Activated naive CD4-positive, alpha-beta T cell treated with anti-CD3 and anti-CD28 coated beads for 36 hours (primary cell): ENCODE measurements at regions of chr15 and their contacts with region 1.

Region 1: DNA sequence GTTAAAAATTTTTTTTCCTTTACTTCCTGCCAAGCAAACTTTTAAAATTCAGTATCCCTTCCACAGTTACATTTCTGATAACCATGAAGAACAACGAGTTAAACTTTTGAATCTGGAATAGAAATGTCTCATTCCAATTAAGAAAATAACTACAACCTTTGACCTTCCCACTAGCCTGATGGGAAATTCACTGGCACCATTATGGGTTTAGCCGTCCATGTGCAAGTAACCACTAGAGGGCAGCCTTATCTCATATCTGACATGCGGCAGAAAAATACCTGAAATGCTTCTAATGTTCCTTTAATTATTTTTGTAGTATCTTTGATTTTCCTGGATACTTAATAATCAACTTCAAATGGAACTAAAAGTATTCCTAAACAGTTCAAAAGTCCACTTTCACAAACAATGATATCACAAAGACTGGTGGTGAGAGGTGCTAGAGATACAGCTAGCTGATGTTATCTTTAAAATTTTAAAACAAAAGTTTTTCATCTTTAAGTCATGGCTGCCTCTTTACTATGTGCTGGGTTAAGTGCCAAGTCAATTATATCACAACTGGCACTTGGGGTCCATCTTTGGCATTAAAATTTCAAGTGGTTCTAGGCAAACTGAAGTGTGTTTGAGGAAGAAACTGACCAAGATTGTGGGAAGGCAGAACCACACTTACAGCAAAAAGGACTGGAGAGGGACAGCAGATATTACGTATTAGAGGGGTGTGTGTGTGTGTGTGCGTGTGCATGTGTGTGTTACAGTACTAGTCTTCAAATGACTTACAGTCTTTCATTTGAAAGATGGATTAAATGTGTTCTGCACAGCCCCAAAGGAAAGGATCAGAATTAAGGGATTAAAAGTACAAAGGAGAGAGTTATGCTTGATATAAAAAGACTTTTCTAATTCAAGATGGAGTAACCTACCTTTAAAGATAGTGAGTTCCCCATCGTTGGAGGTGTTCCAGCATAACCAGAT is 107.1 kb upstream of the ICE2 start:
- DNase-seq: peak; percentile 78
- H3K4me3 Mint-ChIP-seq: peak overlapping the region; percentile 30
- H3K27ac Mint-ChIP-seq: peak overlapping the region; percentile 69
- H3K4me1 Mint-ChIP-seq: peaks cover 77% of the 10 kb centered on the region
- H3K27me3 Mint-ChIP-seq: no peaks in the 10 kb centered on the region

Region 2: DNA sequence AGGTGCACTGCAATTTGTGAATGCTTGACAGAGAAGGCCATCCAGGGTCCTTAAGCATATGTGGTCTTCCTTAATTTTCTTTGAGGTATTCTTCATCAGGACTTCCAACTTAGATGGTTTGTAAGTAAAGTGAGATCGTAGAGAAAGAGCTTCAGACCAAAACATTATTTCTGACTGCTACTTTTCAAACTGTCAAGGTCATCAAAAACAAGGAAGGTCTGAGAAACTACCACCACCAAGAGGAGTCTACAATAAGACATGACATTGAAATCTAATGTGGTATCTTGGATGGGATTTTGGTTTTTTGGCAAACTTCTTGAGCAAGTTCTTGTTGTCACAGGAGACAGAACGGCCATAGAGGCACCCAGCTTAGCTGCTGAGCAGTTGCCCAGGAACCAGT is 1618.5 kb before region 1 on chr15:
- CTCF ChIA-PET with region 1: no interaction called
- intact Hi-C with region 1: no loop called
- DNase-seq: no peak
- H3K4me3 Mint-ChIP-seq: no peak overlapping the region
- H3K27ac Mint-ChIP-seq: no peak overlapping the region
- H3K4me1 Mint-ChIP-seq: peaks cover 4% of the 10 kb centered on the region
- H3K27me3 Mint-ChIP-seq: no peaks in the 10 kb centered on the region

Region 3: DNA sequence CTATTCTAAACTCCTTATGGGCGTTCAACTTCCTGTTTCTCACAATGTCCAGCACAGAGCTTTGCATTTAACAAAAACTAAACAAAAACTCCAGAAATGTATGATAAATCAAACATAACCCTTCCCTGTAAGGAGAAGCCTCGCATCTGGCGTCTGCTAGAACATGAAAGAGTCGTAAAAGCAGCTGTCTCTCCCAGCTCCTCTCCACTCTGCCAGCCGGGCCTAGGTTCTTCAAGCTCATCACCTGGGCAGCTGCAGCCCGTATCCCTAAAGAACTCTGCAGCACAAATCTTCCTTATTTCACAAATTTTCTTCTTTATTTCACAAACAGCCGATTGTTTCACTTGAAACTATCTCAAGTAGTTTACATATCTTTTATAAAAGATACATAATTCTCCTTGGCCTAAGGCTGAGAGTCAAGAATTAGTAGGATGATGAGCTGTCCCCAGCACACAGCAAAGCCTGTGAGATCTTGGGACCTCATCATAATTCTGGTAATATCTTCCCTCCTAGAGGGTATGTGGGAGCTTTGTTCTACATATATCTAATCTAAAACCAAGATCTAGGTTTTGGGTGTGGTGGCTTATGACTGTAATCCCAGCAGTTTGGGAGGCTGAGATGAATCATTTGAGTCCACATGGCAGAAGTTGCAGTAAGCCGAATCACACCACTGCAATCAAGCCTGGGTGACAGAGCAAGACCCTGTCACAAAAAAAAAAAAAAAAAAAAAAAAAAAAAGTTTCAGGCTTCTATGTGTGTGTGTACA is 223.5 kb before region 1 on chr15:
- CTCF ChIA-PET with region 1: interaction called, 4 read pairs
- intact Hi-C with region 1: loop called (anchors 2 kb)
- DNase-seq: peak; percentile 61
- H3K4me3 Mint-ChIP-seq: no peak overlapping the region
- H3K27ac Mint-ChIP-seq: no peak overlapping the region
- H3K4me1 Mint-ChIP-seq: peaks cover 12% of the 10 kb centered on the region
- H3K27me3 Mint-ChIP-seq: no peaks in the 10 kb centered on the region

Region 4: DNA sequence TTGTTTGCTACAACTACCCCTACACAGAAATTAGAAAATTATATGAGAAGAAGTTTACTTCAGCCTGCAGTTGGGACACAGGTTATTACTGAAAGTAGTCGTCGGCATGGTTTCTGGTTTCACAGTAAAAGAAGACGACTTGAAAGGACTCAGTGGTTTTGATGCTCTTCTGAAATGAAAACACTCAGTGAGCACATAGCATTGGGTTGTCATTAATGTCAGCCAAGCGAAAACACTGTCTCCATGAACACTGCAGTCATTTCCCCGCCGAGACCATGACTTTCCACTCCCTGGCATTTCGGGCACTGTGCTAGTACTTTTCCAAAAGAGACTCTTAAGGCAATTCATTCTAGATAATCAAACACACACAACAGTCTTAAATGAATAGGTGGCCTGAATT is 37.9 kb before region 1 on chr15:
- CTCF ChIA-PET with region 1: interaction called, 4 read pairs
- intact Hi-C with region 1: loop called (anchors 1 kb)
- DNase-seq: peak; percentile 83
- H3K4me3 Mint-ChIP-seq: peak overlapping the region; percentile 39
- H3K27ac Mint-ChIP-seq: peak overlapping the region; percentile 80
- H3K4me1 Mint-ChIP-seq: peaks cover 92% of the 10 kb centered on the region
- H3K27me3 Mint-ChIP-seq: no peaks in the 10 kb centered on the region

Region 5: GRCh38 chr15:60649845-60650548 is 64.0 kb after region 1 on chr15:
- CTCF ChIA-PET with region 1: interaction called, 9 read pairs
- intact Hi-C with region 1: loop called (anchors 1 kb)
- DNase-seq: peak; percentile 74
- H3K4me3 Mint-ChIP-seq: peak overlapping the region; percentile 52
- H3K27ac Mint-ChIP-seq: peak overlapping the region; percentile 88
- H3K4me1 Mint-ChIP-seq: peaks cover 49% of the 10 kb centered on the region
- H3K27me3 Mint-ChIP-seq: no peaks in the 10 kb centered on the region

Region 6: GRCh38 chr15:60840306-60840702 is 254.3 kb after region 1 on chr15:
- CTCF ChIA-PET with region 1: interaction called, 4 read pairs
- intact Hi-C with region 1: loop called (anchors 2 kb)
- DNase-seq: peak; percentile 53
- H3K4me3 Mint-ChIP-seq: peak overlapping the region; percentile 76
- H3K27ac Mint-ChIP-seq: peak overlapping the region; percentile 84
- H3K4me1 Mint-ChIP-seq: peaks cover 73% of the 10 kb centered on the region
- H3K27me3 Mint-ChIP-seq: no peaks in the 10 kb centered on the region

Region 7: GRCh38 chr15:60916679-60917460 is 330.8 kb after region 1 on chr15:
- CTCF ChIA-PET with region 1: interaction called, 56 read pairs
- intact Hi-C with region 1: loop called (anchors 1 kb)
- DNase-seq: peak; percentile 96
- H3K4me3 Mint-ChIP-seq: no peak overlapping the region
- H3K27ac Mint-ChIP-seq: peak overlapping the region; percentile 62
- H3K4me1 Mint-ChIP-seq: peaks cover 25% of the 10 kb centered on the region
- H3K27me3 Mint-ChIP-seq: peaks cover 2% of the 10 kb centered on the region

Region 8: GRCh38 chr15:62060113-62060895 is 1474.3 kb after region 1 on chr15 and contains the start of gene VPS13C:
- CTCF ChIA-PET with region 1: no interaction called
- intact Hi-C with region 1: loop called (anchors 10 kb)
- DNase-seq: peak; percentile 90
- H3K4me3 Mint-ChIP-seq: peak within 1 kb of the TSS; percentile 88
- H3K27ac Mint-ChIP-seq: peak within 1 kb of the TSS; percentile 86
- H3K4me1 Mint-ChIP-seq: peaks cover 49% of the 10 kb centered on the region
- H3K27me3 Mint-ChIP-seq: no peaks in the 10 kb centered on the region
- total RNA-seq, gene VPS13C: 37.4 to 38.0 TPM